ENCODE measurements at regions of chr6 and their contacts with region 1.

Region 1: DNA sequence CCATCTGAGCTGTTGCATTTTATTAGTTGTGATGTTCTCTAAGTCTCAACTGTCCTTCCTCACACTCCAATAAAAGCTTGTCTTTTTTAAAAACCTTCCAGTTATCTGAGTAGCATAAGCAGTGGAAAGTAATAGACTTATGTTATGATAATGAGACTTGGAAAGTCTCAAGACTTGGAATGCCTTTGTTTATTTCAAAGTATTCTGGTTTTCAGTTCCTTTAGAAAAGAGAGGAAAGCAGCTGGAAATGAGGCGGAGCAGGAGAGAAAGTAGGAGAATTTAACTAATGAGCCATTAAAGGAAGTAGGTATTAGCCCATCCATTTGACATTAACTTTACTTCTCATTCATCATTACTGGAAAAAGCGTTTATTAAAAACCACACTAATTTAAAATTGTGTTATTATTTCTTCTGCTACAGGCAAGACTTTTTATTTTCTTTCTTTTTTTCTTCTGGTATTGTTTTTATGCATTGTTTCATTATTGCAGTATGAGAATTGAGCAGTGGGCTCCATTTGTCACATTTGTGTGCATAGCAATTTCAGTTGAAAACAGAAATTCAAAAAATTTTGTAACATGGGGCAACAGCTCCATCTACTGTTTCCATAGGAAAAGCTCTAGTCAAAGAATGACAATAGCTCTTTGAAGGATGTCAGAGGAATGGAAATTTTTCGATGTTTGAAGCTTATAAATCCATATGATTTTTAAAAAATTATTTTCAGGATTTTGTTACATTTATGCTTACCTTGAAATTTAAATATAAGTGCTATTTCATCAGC is 194.8 kb downstream of the COL9A1 start:
- DNase-seq: no peak
- ATAC-seq: no peak
- H3K4me3 Mint-ChIP-seq: no peak overlapping the region
- H3K27ac Mint-ChIP-seq: no peak overlapping the region
- H3K4me1 Mint-ChIP-seq: no peaks in the 10 kb centered on the region
- H3K27me3 Mint-ChIP-seq: peaks cover 48% of the 10 kb centered on the region

Region 2: DNA sequence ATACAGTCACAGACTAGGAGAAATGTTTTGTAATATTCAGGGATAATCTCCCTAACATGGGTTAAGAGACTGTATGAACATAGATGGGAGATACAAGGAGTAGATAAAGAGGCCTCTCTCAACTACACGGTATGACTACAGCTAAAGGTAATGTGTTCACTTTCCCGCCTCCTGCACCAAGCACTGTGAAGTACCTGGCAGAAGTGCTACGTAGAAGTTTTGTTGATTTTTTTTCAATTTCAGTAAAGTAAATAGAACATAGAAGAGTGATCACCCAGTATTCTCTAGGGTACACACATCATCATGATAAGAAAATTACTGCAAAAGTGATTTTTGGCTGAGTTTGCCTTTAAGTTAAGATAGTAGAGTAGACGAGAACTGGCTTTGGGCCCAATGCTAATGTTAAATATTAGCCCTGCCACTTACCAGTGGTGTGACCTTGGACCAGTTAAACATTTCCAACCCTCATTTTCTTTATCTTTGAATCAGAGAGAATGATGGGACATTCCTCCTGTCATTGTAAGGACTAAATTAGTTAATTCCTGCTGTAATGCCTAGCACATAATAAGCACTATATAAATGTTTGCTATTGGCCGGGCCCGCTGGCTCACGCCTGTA is 11.3 kb after region 1 on chr6:
- CTCF ChIA-PET with region 1: interaction called, 12 read pairs
- DNase-seq: no peak
- ATAC-seq: no peak
- H3K4me3 Mint-ChIP-seq: no peak overlapping the region
- H3K27ac Mint-ChIP-seq: no peak overlapping the region
- H3K4me1 Mint-ChIP-seq: no peaks in the 10 kb centered on the region
- H3K27me3 Mint-ChIP-seq: peaks cover 30% of the 10 kb centered on the region